ENCODE measurements at regions of chr3 and their contacts with region 1.

Region 1: DNA sequence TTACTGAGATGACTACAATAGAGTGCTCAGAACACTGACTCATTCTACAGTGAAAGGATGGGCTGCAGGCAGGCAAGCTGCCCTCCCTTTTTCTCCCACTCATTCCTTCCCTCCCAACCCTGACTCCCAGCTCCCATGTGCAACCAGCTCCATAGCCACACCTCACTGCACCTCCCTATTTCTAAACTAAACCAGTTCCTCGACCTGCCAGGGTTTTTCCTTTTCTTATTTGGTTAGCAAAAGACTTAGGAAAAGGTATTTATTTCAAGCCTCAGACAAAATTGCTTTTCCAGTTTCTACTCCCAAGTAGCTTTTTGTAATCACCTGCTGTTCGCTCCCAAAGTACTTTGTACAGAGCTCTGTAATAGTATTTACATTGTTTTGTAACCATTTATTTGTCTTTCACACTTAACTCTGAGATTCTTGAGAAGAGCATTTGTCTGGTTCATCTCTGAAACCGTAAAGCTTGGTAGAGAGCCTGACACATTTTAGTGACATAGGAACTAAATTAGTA is 2.2 kb downstream of the AADAC start:
- DNase-seq: peak; percentile 74 to 82
- H3K4me3 ChIP-seq: no peak overlapping the region
- H3K4me3 Mint-ChIP-seq: peak overlapping the region; percentile 65
- H3K27ac Mint-ChIP-seq: peak overlapping the region; percentile 80
- H3K4me1 ChIP-seq: peaks cover 55% of the 10 kb centered on the region
- H3K4me1 Mint-ChIP-seq: peaks cover 35% of the 10 kb centered on the region
- H3K27me3 ChIP-seq: no peaks in the 10 kb centered on the region
- H3K27me3 Mint-ChIP-seq: no peaks in the 10 kb centered on the region
- CTCF ChIP-seq: no peak

Region 2: DNA sequence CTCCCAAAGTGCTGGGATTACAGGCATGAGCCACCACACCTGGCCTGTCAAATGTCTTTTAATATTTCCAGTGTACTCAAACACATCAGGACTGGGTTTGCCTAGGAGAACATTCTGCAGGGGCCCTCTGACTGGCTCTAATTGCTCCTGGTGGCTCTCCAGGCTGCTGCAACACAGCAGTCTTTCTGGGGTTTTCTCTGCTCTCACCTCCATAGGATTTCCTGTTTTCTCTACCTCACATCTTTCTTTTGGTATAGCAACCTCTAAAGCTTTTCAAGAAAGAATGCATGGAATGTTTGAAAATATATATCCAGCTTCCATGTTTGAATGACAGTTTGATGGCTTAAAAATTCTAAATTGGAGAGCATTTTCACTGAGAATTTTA is 272.0 kb before region 1 on chr3:
- CTCF ChIA-PET with region 1: no interaction called
- POLR2A ChIA-PET with region 1: no interaction called
- intact Hi-C with region 1: no loop called
- DNase-seq: no peak
- H3K4me3 ChIP-seq: no peak overlapping the region
- H3K4me3 Mint-ChIP-seq: no peak overlapping the region
- H3K27ac Mint-ChIP-seq: peak overlapping the region; percentile 51
- H3K4me1 ChIP-seq: peaks cover 15% of the 10 kb centered on the region
- H3K4me1 Mint-ChIP-seq: peaks cover 6% of the 10 kb centered on the region
- H3K27me3 ChIP-seq: no peaks in the 10 kb centered on the region
- H3K27me3 Mint-ChIP-seq: no peaks in the 10 kb centered on the region
- CTCF ChIP-seq: no peak

Region 3: GRCh38 chr3:151787626-151788025 is 28.5 kb before region 1 on chr3:
- CTCF ChIA-PET with region 1: interaction called, 4 read pairs
- POLR2A ChIA-PET with region 1: no interaction called
- intact Hi-C with region 1: loop called (anchors 1 kb)
- DNase-seq: no peak
- H3K4me3 ChIP-seq: no peak overlapping the region
- H3K4me3 Mint-ChIP-seq: no peak overlapping the region
- H3K27ac Mint-ChIP-seq: no peak overlapping the region
- H3K4me1 ChIP-seq: peaks cover 41% of the 10 kb centered on the region
- H3K4me1 Mint-ChIP-seq: peaks cover 16% of the 10 kb centered on the region
- H3K27me3 ChIP-seq: no peaks in the 10 kb centered on the region
- H3K27me3 Mint-ChIP-seq: no peaks in the 10 kb centered on the region
- CTCF ChIP-seq: no peak

Region 4: DNA sequence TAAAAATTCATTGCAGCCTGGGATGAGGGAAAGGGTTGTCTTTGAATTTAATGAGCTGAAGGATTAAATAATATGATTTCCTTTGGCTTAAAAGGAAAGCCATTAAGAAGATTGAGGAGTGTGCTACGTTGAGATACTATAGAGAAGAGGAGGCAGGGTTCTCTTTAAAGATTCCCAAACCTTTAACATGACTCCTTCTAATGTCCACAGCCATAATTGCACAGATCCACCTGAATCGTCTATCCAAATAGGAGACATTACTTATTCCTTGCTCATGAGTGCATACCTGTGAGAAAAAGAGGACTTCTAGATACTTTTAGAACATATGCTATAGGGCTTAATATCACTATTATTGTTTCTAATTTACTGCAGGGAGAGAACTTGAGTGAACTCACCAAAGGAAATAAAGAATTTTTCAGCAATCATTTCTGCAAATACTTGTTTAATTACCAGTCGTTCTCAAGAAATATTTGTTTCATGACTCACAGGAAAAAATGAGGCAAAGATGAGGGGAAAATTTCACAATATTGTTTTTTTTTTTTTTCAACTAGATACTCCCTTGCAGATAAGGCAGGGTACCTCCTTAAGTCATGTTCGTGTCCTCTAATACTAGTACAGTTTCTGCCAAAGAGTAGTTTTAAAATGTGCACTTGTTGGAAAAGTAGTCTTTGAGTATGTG is 48.4 kb after region 1 on chr3:
- CTCF ChIA-PET with region 1: no interaction called
- POLR2A ChIA-PET with region 1: no interaction called
- intact Hi-C with region 1: no loop called
- DNase-seq: no peak
- H3K4me3 ChIP-seq: no peak overlapping the region
- H3K4me3 Mint-ChIP-seq: no peak overlapping the region
- H3K27ac Mint-ChIP-seq: no peak overlapping the region
- H3K4me1 ChIP-seq: peaks cover 14% of the 10 kb centered on the region
- H3K4me1 Mint-ChIP-seq: peaks cover 13% of the 10 kb centered on the region
- H3K27me3 ChIP-seq: no peaks in the 10 kb centered on the region
- H3K27me3 Mint-ChIP-seq: no peaks in the 10 kb centered on the region
- CTCF ChIP-seq: no peak

Measured in Caco-2 (cell line).